Activated CD8-positive, alpha-beta T cell treated with anti-CD3 and anti-CD28 coated beads, Interleukin-2, amount 10 ng/mL, durations not matched to agents 7 days and 5 days (primary cell): ENCODE measurements at regions of chr1 and their contacts with region 1.

Region 1: DNA sequence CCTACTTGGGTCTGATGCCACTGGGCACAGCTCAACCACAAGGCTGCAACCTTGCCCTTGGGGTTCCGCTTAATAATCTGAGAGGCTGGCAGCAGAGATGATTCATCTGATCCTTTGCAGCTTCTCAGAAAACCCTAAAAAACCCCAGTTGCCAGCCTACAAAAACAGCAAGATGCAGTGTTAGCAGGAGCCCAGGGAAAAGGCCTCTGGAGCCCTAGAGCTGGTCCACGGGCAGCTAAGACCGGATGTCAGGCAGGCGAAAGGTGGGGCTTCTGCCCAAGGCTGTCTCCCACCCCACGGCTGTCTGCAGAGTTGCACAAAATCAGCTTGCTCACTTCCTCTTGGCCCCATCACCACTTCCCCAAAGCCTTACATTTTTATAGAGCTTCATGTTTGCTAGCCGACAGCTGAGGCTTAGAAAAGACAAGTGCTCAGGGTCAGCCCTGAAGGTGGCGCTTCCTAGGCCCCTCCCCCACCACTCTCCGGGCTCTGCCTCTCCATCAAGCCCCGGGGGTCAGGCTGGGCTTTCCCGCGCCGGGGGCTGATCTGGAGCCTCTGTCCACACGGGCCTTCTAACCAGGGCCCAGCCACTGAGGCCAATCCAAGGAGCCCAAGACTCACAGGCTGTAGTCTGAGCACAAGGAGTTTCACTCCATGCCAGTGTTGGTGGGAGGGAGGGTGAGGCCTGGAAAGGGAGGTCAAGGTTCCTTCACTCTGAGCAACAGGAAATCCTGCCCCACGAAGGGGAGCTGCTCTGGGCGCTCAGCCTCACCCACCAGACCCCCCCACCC is 4.2 kb upstream of the ADORA3 start:
- DNase-seq: peak; percentile 82
- ATAC-seq: peak; percentile 66
- H3K4me3 Mint-ChIP-seq: peak overlapping the region; percentile 69
- H3K27ac Mint-ChIP-seq: peak overlapping the region; percentile 92
- H3K4me1 Mint-ChIP-seq: peaks cover 57% of the 10 kb centered on the region
- H3K27me3 Mint-ChIP-seq: no peaks in the 10 kb centered on the region

Region 2: DNA sequence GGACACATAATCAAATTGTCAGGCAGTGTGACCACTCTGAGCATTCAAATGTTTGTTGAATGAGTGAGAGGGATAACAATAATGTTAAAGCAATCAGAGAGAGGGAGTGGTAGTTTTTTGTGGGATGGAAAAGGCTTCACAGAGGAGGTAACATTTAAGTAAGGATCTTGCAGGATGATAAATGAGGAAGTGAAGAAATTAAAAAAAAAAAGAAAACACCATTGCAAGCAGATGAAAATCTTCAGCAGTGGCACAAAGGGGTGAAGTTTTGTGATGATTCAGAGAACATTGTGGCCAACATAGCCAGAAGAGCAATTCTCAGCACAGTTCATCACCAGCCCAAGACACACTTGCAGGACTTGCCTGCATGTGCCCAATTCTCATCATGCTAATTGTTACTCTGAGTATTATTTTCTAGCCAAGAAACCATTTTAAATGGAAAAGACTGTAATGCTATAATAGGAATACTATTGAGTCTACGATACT is 115.1 kb before region 1 on chr1:
- CTCF ChIA-PET with region 1: no interaction called
- POLR2A ChIA-PET with region 1: no interaction called
- DNase-seq: no peak
- ATAC-seq: no peak
- H3K4me3 Mint-ChIP-seq: no peak overlapping the region
- H3K27ac Mint-ChIP-seq: no peak overlapping the region
- H3K4me1 Mint-ChIP-seq: no peaks in the 10 kb centered on the region
- H3K27me3 Mint-ChIP-seq: peaks cover 44% of the 10 kb centered on the region

Region 3: GRCh38 chr1:111471012-111471411 is 36.6 kb before region 1 on chr1:
- CTCF ChIA-PET with region 1: interaction called, 144 read pairs
- POLR2A ChIA-PET with region 1: interaction called, 23 read pairs
- DNase-seq: peak; percentile 89
- ATAC-seq: peak; percentile 80
- H3K4me3 Mint-ChIP-seq: no peak overlapping the region
- H3K27ac Mint-ChIP-seq: no peak overlapping the region
- H3K4me1 Mint-ChIP-seq: peaks cover 27% of the 10 kb centered on the region
- H3K27me3 Mint-ChIP-seq: no peaks in the 10 kb centered on the region

Region 4: GRCh38 chr1:111553196-111553595 is 45.6 kb after region 1 on chr1:
- CTCF ChIA-PET with region 1: interaction called, 15 read pairs
- POLR2A ChIA-PET with region 1: no interaction called
- DNase-seq: no peak
- ATAC-seq: no peak
- H3K4me3 Mint-ChIP-seq: no peak overlapping the region
- H3K27ac Mint-ChIP-seq: no peak overlapping the region
- H3K4me1 Mint-ChIP-seq: peaks cover 4% of the 10 kb centered on the region
- H3K27me3 Mint-ChIP-seq: no peaks in the 10 kb centered on the region

Region 5: DNA sequence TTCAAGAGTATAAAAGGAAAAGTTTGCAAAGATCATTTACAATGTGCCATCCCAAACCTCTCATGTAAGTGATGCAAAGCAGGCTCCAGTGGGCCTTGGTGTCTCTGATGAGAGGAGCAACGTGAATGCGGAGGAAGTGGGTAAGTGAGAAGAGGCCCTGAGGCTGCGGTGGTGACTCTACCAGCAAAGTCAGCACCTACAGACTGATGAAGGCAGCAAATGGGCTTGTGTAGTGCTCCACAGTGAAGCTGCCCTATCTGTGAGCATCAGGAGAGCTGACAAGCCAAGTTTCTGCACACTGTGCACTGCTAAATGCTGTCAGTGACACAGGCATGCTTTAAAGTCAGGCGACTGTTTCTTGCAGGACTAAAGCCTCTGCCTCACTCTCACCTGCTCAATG is 96.4 kb after region 1 on chr1:
- CTCF ChIA-PET with region 1: interaction called, 55 read pairs
- POLR2A ChIA-PET with region 1: interaction called, 23 read pairs
- DNase-seq: peak; percentile 92
- ATAC-seq: peak; percentile 98
- H3K4me3 Mint-ChIP-seq: peak overlapping the region; percentile 40
- H3K27ac Mint-ChIP-seq: peak overlapping the region; percentile 92
- H3K4me1 Mint-ChIP-seq: peaks cover 73% of the 10 kb centered on the region
- H3K27me3 Mint-ChIP-seq: no peaks in the 10 kb centered on the region

Region 6: DNA sequence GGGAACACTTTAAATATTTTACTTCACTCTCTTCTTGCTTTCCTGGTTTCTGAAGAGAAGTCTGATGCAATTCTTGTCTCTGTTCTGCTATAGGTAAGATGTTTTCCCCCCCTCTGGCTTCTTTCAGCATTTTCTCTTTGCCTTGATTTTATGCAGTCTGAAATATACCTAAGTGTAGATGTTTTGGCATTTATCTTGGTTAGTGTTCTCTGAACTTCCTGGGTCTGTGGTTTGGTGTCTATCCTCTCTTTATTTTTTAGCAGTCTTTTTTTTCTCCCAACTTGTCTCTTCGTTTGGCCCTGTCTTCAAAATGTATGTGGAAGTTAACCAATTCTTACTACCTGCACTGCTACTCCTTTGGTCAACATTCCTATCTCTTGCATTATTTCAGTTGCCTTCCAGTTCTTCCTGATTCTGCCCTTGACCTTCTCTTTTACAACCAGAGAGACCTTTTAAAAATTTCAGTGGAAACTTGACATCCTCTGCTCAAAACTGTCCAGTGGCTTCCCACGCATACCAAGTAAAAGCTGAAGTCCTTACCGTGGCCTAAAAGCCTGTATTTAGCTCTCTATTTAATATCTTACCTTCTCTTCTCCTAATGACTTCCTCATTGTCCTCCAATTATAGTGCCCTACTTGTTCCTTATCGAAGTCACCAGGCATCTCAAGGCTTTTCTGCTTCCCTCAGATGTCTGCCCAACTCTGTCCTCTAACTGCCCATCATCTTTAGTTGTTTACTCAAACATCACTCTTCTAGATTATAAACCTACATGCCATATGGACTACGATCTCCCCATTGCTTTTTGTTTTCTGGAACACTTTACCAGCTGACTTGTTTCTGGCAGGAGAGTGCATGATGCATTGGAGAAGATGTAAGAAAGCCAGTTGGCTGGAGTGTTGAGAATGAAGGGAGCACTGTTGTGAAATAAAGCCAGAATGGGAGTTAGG is 152.9 kb after region 1 on chr1:
- CTCF ChIA-PET with region 1: interaction called, 48 read pairs
- POLR2A ChIA-PET with region 1: interaction called, 4 read pairs
- DNase-seq: no peak
- ATAC-seq: peak; percentile 70
- H3K4me3 Mint-ChIP-seq: no peak overlapping the region
- H3K27ac Mint-ChIP-seq: no peak overlapping the region
- H3K4me1 Mint-ChIP-seq: peaks cover 46% of the 10 kb centered on the region
- H3K27me3 Mint-ChIP-seq: no peaks in the 10 kb centered on the region

Region 7: DNA sequence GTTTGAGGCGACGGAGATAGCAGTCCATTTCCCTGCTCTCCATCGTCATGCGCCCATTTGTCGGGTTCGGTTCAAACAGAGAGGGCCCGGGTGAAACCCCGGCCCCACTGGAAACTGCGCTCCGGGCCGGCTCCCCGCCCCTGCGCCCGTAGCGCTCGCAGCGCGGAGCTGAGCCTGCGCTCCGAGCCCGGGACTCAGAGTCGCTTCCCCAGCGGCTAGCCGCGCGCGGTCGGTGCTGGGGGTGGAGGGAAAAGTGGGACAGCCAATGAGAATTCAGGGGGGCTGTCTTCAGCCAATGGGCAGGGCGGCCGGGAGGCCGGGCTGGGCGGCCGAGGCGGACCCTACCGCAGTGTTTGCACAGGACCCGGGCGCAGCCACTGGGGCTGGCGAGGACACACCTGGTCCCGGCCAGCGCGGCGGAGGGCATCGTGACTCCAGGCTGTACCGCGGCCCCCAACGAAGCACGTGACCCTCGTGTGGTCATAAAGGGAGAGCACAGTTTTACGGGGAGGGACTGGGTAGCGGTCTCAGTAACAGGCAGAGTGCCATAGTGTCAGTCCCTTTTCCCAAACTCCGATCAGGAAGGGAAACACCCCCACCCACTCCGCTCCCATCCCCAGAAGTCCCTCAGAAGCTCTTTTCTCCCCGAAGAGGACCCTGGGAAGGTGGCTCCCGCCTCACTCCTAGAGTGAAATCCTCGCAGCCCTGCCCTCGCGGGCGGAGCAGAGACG is 231.8 kb after region 1 on chr1 and contains the start of gene INKA2:
- CTCF ChIA-PET with region 1: interaction called, 22 read pairs
- POLR2A ChIA-PET with region 1: interaction called, 12 read pairs
- DNase-seq: peak; percentile 88
- ATAC-seq: peak; percentile 90
- H3K4me3 Mint-ChIP-seq: peak within 1 kb of the TSS; percentile 80
- H3K27ac Mint-ChIP-seq: peak within 1 kb of the TSS; percentile 75
- H3K4me1 Mint-ChIP-seq: peaks cover 21% of the 10 kb centered on the region
- H3K27me3 Mint-ChIP-seq: peaks cover 46% of the 10 kb centered on the region
- total RNA-seq, gene INKA2: 4.1 to 4.3 TPM